ENCODE measurements at regions of chr11 and their contacts with region 1.

Region 1: DNA sequence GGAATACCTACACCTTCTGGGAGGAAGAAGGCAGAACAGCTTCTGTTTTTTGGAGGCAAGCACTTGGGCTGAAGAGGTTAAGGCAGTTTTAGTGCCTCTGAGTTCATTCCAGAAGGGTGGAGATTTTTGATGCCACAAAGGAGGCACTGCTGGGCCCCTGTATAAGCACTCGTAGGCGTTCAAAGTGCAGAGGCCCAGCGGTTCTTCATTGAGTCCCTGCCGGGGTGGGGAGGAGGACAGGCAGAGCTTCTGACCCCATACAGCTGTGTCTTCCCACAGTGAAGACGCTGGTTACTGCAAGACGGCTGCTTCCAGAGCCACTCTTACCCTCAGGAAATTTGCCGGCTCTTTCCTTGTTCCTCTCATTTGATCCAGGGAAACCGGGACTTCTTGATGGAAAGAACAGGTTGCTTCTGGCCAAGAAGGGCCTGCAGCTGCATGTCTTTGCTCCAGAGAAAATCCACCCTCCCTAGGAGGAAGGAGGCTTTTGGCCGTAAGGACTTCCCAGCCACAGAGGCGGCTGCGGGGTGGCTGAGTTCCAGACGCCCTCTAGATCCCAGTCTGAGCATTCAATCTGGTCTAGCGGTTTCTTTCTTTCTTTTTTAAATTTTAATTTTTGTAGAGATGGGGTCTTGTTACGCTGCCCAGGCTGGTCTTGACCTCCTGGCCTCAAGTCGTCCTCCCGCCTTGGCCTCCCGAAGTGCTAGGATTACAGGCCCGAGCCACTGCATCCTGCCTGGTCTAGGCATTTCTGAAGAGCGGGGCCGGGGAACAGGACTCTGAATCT is 9.4 kb downstream of the ADAMTS15 start:
- DNase-seq: peak in 1 of 2 donors; percentile 71
- H3K4me3 ChIP-seq: peak overlapping the region; percentile 11 to 21
- H3K27ac ChIP-seq: peak overlapping the region; percentile 75 to 94
- H3K4me1 ChIP-seq: peaks cover 0 to 79% (median 48%) of the 10 kb centered on the region in 4 donors
- H3K27me3 ChIP-seq: no peaks in the 10 kb centered on the region
- CTCF ChIP-seq: no peak

Region 2: DNA sequence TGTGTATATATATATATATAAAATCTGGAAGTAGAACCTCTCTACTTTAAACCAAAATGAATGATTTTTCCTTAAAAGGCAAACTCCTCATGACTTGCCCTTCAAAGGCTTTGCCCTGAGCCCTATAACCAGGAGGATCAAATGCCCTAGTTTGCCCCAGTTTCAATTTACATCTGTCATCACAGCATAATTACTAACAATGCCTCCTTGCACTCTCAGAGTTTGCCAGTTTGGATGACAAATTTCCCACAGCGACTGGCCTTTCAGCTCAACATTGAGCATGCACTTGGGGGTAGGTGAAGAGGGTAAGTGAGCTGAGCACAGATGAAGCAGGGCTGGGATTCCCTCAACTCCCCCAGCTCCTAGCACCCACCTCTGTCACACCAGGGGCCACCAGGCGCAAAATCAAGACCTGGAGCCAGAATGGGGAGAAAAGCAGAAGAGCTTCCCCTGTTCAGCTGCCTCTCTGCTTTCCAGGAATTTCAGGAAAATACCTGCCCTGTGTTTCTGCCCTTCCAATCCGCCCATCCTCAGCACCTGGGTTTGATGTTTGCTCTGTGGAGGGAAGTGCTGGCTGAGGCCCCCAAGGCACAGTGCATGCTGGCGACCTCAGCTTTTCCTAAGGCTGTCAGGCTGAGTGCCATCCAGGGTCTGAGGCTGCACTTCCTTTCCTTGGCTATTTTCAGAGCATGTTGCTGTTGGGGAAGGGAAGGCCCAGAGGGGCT is 58.2 kb after region 1 on chr11:
- intact Hi-C with region 1: loop called (anchors 5 kb)
- DNase-seq: no peak
- H3K4me3 ChIP-seq: no peak overlapping the region
- H3K27ac ChIP-seq: no peak overlapping the region
- H3K4me1 ChIP-seq: peaks cover 0 to 51% (median 22%) of the 10 kb centered on the region in 4 donors
- H3K27me3 ChIP-seq: no peaks in the 10 kb centered on the region
- CTCF ChIP-seq: no peak

Measured in tibial artery (tissue), 4 donors.